ENCODE measurements at regions of chr17 and their contacts with region 1.

Region 1: GRCh38 chr17:57739402-57740392 is 5.4 kb downstream of the CCDC182 start:
- DNase-seq: peak; percentile 50
- ATAC-seq: peak; percentile 75
- H3K4me3 Mint-ChIP-seq: no peak overlapping the region
- H3K27ac Mint-ChIP-seq: peak overlapping the region; percentile 4
- H3K4me1 Mint-ChIP-seq: peaks cover 19% of the 10 kb centered on the region
- H3K27me3 Mint-ChIP-seq: peaks cover 7% of the 10 kb centered on the region

Region 2: GRCh38 chr17:57130761-57131461 is 608.8 kb before region 1 on chr17:
- CTCF ChIA-PET with region 1: interaction called, 18 read pairs
- POLR2A ChIA-PET with region 1: no interaction called
- DNase-seq: peak; percentile 89
- ATAC-seq: peak; percentile 91
- H3K4me3 Mint-ChIP-seq: peak overlapping the region; percentile 7
- H3K27ac Mint-ChIP-seq: no peak overlapping the region
- H3K4me1 Mint-ChIP-seq: peaks cover 7% of the 10 kb centered on the region
- H3K27me3 Mint-ChIP-seq: no peaks in the 10 kb centered on the region

Region 3: DNA sequence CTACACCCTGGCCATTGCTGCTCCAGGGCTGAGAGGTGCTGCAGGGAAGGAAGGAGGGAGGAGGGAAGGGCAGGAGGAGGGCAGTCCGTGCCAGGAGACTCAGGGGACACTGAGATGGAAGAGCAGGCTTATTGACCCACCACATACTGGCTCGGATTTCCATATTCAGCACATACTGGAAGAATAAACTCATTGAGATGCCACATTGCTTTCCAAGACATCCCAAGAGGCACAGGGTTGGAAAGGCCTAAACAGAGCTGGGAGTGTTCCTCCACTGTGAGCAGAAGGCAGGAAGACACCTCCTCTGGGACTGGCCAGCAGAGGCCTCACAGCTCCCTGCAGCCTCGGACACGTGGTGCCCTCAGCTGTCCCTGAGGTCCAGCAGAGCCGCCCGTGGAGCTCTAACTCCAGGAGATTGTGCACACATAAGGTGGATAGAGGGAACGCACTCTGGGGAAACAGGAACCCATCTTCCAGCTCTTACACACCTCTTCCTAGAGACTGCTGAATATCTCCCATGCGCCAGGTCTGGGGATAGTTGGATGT is 12.0 kb before region 1 on chr17:
- CTCF ChIA-PET with region 1: interaction called, 11 read pairs
- POLR2A ChIA-PET with region 1: no interaction called
- DNase-seq: no peak
- ATAC-seq: no peak
- H3K4me3 Mint-ChIP-seq: no peak overlapping the region
- H3K27ac Mint-ChIP-seq: no peak overlapping the region
- H3K4me1 Mint-ChIP-seq: peaks cover 6% of the 10 kb centered on the region
- H3K27me3 Mint-ChIP-seq: peaks cover 11% of the 10 kb centered on the region